ENCODE measurements at regions of chr6 and their contacts with region 1.

Region 1: DNA sequence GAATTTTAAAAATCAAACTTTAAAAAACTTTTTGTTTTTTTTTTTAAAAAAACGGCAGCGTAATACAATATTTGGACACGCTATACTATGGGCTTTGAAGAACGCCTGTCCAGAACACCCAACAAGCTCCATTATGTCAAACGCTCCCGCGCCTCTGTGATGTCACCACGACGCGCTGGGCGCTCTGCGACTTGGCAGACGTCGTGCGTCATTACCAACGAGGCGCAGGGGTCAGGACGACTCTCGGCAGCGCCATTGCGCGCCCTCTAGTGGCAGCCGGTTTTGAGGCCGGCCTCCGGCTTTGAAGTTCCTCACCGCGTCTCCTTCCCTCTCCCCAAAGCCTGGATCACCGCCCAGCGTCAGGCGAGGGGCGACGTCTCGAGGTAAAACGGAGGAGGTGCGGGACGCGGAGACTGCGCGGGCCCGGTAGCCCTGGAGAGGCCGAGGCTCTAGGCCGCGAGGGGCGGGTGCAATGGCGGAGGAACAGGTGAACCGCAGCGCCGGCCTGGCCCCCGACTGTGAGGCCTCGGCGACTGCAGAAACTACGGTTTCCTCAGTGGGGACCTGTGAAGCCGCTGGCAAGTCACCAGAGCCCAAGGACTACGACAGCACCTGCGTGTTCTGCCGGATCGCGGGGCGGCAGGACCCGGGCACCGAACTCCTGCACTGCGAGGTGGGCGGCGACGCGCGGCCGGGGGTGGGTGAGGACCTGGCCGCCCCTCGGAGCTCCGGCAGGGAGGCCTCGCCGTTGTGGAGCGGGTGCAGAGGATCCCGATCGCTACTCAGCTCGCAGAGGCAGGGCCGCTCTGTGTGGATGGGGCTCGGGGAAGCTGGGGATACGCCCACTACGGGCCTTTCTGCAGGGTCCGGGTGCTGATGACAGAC is at the start of gene HINT3:
- DNase-seq: peak; percentile 99
- H3K4me3 ChIP-seq: peak within 1 kb of the TSS; percentile 88
- H3K27ac ChIP-seq: peak within 1 kb of the TSS; percentile 95
- H3K4me1 ChIP-seq: no peaks in the 10 kb centered on the region
- H3K27me3 ChIP-seq: no peaks in the 10 kb centered on the region
- CTCF ChIP-seq: peak; percentile 99
- total RNA-seq, gene HINT3: 17.1 to 38.5 TPM

Region 2: DNA sequence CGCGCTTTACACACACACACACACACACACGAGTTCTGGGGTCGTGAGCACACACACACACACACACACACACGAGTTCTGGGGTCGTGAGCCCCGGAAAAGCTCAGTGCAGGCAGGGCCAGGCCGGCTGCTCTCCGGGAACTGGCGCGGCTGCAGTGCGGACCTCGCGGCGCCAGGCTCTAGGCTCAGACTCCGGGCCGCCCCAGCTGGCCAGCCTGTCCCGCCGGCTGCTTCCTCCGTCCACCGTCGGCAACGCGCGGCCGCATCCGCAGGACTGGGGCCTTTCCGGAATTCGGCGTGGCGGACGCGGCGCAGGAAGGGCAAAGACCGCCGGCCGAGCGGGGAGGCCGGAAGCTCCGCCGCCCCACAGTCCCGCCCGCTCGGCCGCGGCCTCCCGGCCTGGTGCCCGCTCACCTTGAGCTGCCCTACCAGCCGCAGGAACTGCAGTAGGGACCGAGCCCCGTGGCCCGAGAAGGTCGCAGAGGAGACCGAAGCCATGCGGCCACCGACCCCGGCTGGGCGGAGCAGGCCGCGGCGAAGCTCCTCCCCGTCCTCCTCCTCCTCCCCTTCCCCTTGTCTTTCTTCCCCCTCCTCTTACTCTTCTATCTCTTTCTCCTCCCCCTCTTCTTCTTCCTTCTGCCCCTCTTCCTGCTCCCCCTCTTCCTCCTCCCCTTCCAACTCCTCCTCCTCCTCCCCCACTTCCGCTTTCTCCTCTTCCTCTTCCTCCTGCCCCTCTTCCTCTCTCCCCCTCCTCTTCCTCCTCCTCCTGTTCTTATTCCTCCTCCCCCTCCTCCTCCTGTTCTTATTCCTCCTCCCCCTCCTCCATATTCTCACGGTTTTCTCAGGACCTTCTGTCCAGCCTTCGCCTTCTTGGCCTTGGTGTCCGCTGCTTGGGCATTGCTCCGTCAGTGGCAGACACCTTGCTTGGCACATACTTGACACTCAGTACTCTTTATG is 655.0 kb before region 1 on chr6 and contains the start of gene HDDC2:
- intact Hi-C with region 1: loop called (anchors 10 kb)
- DNase-seq: peak; percentile 70
- H3K4me3 ChIP-seq: peak within 1 kb of the TSS; percentile 54
- H3K27ac ChIP-seq: peak within 1 kb of the TSS; percentile 77
- H3K4me1 ChIP-seq: peaks cover 8% of the 10 kb centered on the region
- H3K27me3 ChIP-seq: no peaks in the 10 kb centered on the region
- CTCF ChIP-seq: no peak
- total RNA-seq, gene HDDC2: 39.4 to 44.8 TPM

Region 3: GRCh38 chr6:125346201-125346925 is 610.4 kb before region 1 on chr6:
- intact Hi-C with region 1: no loop called
- DNase-seq: no peak
- H3K4me3 ChIP-seq: no peak overlapping the region
- H3K27ac ChIP-seq: no peak overlapping the region
- H3K4me1 ChIP-seq: no peaks in the 10 kb centered on the region
- H3K27me3 ChIP-seq: no peaks in the 10 kb centered on the region
- CTCF ChIP-seq: no peak

Region 4: GRCh38 chr6:125779924-125780539 is 176.7 kb before region 1 on chr6:
- intact Hi-C with region 1: loop called (anchors 2 kb)
- DNase-seq: peak; percentile 87
- H3K4me3 ChIP-seq: peak overlapping the region; percentile 48
- H3K27ac ChIP-seq: peak overlapping the region; percentile 90
- H3K4me1 ChIP-seq: no peaks in the 10 kb centered on the region
- H3K27me3 ChIP-seq: no peaks in the 10 kb centered on the region
- CTCF ChIP-seq: no peak

Region 5: GRCh38 chr6:125790358-125791150 is 166.2 kb before region 1 on chr6 and contains the start of gene NCOA7:
- intact Hi-C with region 1: loop called (anchors 5 kb)
- DNase-seq: peak; percentile 81
- H3K4me3 ChIP-seq: peak within 1 kb of the TSS; percentile 90
- H3K27ac ChIP-seq: peak within 1 kb of the TSS; percentile 93
- H3K4me1 ChIP-seq: peaks cover 6% of the 10 kb centered on the region
- H3K27me3 ChIP-seq: no peaks in the 10 kb centered on the region
- CTCF ChIP-seq: no peak
- total RNA-seq, gene NCOA7: 24.9 to 59.3 TPM

Region 6: DNA sequence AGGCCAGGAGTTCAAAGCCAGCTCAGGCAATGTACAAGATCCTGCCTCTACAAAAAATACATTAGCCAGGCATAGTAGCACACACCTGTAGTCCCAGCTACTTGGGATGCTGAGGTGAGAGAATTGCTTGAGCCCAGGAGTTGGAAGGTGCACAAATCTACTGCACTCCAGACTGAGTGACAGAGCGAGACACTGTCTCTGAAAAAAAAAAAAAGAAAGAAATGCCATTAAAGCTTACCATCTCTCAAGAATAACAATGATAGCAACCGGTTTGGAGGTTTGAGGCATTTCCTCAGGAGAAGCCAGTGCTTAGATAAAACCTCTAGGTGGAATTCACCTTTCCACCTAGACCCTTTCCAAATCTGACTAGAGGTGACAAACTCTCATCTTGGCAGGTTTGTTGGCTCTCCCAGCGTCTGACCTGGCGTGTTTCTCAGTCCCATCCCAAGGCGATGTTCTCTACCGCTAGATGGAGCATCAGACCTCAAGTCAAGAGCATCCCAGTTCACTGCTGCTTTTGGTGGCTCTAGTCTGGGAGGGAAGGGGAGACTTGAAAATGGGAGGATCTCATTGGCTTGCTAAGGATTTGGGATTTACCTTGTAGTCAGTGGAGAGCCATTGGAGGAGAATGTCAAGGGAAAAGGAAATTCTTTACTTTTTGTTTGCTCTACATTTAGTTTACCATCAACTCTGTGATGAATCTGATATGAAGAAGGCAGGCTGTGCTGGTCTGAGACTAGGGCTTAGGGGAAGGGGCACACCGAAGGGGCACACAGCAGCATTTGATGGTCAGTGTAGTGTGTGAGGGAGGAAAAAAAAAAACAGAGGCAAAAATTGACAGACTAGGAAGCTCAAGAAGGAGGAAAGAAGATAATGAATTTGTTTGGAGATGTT is 98.1 kb before region 1 on chr6:
- intact Hi-C with region 1: loop called (anchors 2 kb)
- DNase-seq: peak; percentile 72
- H3K4me3 ChIP-seq: no peak overlapping the region
- H3K27ac ChIP-seq: no peak overlapping the region
- H3K4me1 ChIP-seq: no peaks in the 10 kb centered on the region
- H3K27me3 ChIP-seq: no peaks in the 10 kb centered on the region
- CTCF ChIP-seq: peak; percentile 63